WTC11 (cell line): ENCODE measurements at regions of chr4 and their contacts with region 1.

Region 1: GRCh38 chr4:159455675-159456237 is 352.9 kb downstream of the RAPGEF2 start:
- DNase-seq: peak; percentile 16
- ATAC-seq: peak; percentile 68
- H3K4me3 Mint-ChIP-seq: no peak overlapping the region
- H3K27ac Mint-ChIP-seq: no peak overlapping the region
- H3K4me1 Mint-ChIP-seq: peaks cover 3% of the 10 kb centered on the region
- H3K27me3 Mint-ChIP-seq: no peaks in the 10 kb centered on the region
- CTCF ChIP-seq: peak; percentile 48

Region 2: GRCh38 chr4:159290321-159291030 is 165.3 kb before region 1 on chr4:
- CTCF ChIA-PET with region 1: no interaction called
- POLR2A ChIA-PET with region 1: no interaction called
- DNase-seq: no peak
- ATAC-seq: no peak
- H3K4me3 Mint-ChIP-seq: no peak overlapping the region
- H3K27ac Mint-ChIP-seq: no peak overlapping the region
- H3K4me1 Mint-ChIP-seq: peaks cover 14% of the 10 kb centered on the region
- H3K27me3 Mint-ChIP-seq: no peaks in the 10 kb centered on the region
- CTCF ChIP-seq: no peak

Region 3: DNA sequence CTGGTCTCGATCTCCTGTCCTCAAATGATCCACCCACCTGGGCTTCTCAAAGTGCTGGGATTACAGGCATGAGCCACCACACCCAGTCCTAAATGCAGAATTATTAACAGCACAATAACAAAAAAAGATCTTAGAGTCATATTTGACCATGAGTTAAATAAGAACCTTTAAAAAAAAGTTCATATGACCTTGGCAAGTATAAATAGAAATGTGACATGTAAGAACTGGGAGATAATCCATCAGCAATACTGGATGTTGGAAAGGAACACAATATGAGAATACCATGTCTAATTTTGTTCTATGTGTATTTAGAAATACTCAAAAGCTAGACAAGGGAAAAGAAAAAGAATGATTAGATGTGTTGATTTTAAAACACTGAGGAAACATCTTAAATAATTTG is 121.3 kb before region 1 on chr4:
- CTCF ChIA-PET with region 1: no interaction called
- POLR2A ChIA-PET with region 1: no interaction called
- DNase-seq: no peak
- ATAC-seq: no peak
- H3K4me3 Mint-ChIP-seq: no peak overlapping the region
- H3K27ac Mint-ChIP-seq: no peak overlapping the region
- H3K4me1 Mint-ChIP-seq: no peaks in the 10 kb centered on the region
- H3K27me3 Mint-ChIP-seq: no peaks in the 10 kb centered on the region
- CTCF ChIP-seq: no peak

Region 4: GRCh38 chr4:159376289-159376688 is 79.5 kb before region 1 on chr4:
- CTCF ChIA-PET with region 1: interaction called, 11 read pairs
- POLR2A ChIA-PET with region 1: no interaction called
- DNase-seq: no peak
- ATAC-seq: no peak
- H3K4me3 Mint-ChIP-seq: no peak overlapping the region
- H3K27ac Mint-ChIP-seq: no peak overlapping the region
- H3K4me1 Mint-ChIP-seq: no peaks in the 10 kb centered on the region
- H3K27me3 Mint-ChIP-seq: peaks cover 2% of the 10 kb centered on the region; the same call in 1 of the 2 replicates
- CTCF ChIP-seq: no peak

Region 5: DNA sequence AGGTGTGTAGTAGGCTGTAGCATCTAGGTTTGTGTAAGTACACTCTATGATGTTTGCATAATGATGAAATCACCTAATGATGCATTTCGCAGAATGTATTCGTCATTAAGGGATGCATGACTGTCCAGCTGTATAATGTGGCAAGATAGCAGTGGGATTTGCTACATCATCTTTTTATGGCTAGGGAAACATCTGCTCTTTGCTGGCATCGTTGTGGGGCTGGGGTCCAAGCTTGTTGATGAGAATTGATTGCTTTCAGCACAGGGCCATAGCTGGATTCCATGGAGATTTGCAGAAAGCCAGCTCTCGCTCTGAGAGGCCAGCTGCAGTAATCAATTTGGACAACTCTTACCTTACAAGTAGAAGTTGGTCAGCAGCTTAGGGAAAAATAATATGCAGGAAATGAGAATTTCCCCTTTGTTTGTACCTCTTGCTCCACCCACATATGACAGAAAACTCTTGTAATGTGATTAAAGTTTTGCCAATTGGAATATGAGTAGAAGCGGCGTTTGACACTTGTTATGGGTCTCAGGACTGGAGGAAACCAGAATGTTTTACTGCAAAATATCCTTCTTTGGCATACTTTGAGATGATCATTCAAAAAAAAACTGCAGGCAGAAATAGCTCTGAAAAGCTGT is 42.3 kb before region 1 on chr4:
- CTCF ChIA-PET with region 1: interaction called, 12 read pairs
- POLR2A ChIA-PET with region 1: no interaction called
- DNase-seq: no peak
- ATAC-seq: no peak
- H3K4me3 Mint-ChIP-seq: no peak overlapping the region
- H3K27ac Mint-ChIP-seq: no peak overlapping the region
- H3K4me1 Mint-ChIP-seq: peaks cover 7% of the 10 kb centered on the region
- H3K27me3 Mint-ChIP-seq: peaks cover 3% of the 10 kb centered on the region; the same call in 1 of the 2 replicates
- CTCF ChIP-seq: no peak

Region 6: DNA sequence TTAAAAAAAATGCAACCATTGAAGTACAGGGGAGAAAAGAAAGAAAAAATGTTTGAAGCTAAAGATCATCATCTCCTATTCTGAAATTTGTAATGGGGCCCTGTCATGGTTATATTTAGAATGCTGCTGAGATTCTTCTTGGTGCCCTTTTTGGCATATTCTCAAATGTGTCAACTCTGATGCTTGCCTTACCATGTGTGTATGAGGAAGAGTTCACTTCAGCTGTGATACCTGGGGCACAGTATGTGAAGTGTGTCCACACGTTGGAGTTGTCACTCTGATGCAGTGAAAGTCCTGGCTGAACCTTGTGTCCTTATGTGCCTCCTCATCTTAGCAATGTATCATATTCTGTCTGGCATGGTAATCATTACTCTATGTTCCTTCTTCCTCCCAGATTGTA is 25.1 kb after region 1 on chr4:
- CTCF ChIA-PET with region 1: no interaction called
- POLR2A ChIA-PET with region 1: no interaction called
- DNase-seq: no peak
- ATAC-seq: no peak
- H3K4me3 Mint-ChIP-seq: no peak overlapping the region
- H3K27ac Mint-ChIP-seq: no peak overlapping the region
- H3K4me1 Mint-ChIP-seq: peaks cover 21% of the 10 kb centered on the region
- H3K27me3 Mint-ChIP-seq: no peaks in the 10 kb centered on the region
- CTCF ChIP-seq: no peak